Activated B cell treated with CpG ODN at 0.5 μM for 24 hours (primary cell): ENCODE measurements at regions of chr6 and their contacts with region 1.

Region 1: GRCh38 chr6:132669690-132670291 is 10.8 kb upstream of the TAAR1 start:
- DNase-seq: no peak
- ATAC-seq: peak; percentile 68
- H3K4me3 Mint-ChIP-seq: peak overlapping the region; percentile 55
- H3K27ac Mint-ChIP-seq: no peak overlapping the region
- H3K4me1 Mint-ChIP-seq: peaks cover 5% of the 10 kb centered on the region
- H3K27me3 Mint-ChIP-seq: no peaks in the 10 kb centered on the region
- CTCF ChIP-seq: peak; percentile 49

Region 2: DNA sequence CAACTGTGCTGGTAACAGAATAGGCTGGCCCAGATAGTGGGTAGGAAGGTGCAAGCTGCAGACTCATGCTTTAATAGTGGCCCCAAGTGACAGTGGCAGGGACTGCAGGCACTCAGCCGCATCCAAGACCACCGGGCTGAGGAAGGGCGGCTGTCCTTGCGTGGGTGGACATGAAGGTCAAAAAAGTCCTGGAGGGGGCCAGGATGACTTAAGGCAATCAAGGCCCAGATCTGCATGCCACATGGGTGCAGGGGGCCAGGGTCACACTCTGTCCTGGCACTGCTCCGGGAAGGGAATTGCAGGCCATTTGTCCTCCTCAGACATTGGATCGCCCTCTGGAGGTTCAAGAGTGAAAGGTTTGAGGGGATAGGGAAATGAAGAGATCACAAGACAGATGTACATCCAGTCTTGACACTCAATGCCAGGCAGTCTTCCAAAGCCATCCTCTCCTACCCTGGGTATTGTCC is 98.3 kb after region 1 on chr6:
- CTCF ChIA-PET with region 1: interaction called, 126 read pairs
- POLR2A ChIA-PET with region 1: interaction called, 4 read pairs
- intact Hi-C with region 1: loop called (anchors 1 kb)
- DNase-seq: peak; percentile 33
- ATAC-seq: peak; percentile 79
- H3K4me3 Mint-ChIP-seq: peak overlapping the region; percentile 47
- H3K27ac Mint-ChIP-seq: no peak overlapping the region
- H3K4me1 Mint-ChIP-seq: peaks cover 18% of the 10 kb centered on the region
- H3K27me3 Mint-ChIP-seq: no peaks in the 10 kb centered on the region
- CTCF ChIP-seq: peak; percentile 30

Region 3: DNA sequence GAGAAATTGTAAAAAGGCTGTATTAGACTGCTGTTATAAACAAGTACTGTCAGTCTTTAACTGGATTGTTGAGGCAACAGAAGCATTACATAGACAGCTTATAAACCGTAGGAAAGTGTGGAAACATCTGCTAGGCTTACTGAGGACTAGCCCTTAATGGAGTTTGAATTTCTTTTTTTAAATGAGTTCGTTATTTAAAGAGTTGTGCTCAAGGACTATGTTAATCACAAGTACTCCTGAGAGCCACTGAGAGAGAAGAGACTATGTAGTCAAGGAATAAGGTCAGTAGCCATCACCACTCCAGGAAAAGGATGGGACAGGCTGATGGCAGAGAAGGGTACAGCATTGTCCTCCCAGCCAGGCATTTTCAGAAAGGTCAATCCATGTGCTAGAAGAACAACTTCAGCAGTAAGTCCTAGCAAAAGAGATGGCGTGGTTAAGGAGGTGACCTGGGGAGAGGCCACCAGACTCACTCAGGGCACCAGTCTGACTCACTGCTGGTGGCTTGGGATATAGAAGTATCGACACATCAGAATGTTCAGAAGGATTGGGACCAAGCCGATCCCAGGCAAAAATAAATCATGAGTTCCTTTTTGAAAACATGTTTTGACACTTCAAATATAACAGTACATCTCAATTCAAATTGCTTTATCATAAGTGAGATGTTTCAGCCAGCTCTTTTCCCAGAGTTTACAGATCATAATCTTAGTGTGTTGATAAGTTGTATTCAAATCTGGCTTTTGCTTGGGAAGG is 151.0 kb after region 1 on chr6:
- CTCF ChIA-PET with region 1: interaction called, 15 read pairs
- POLR2A ChIA-PET with region 1: interaction called, 8 read pairs
- intact Hi-C with region 1: no loop called
- DNase-seq: no peak
- ATAC-seq: no peak
- H3K4me3 Mint-ChIP-seq: no peak overlapping the region
- H3K27ac Mint-ChIP-seq: peak overlapping the region; percentile 99
- H3K4me1 Mint-ChIP-seq: peaks cover 48% of the 10 kb centered on the region
- H3K27me3 Mint-ChIP-seq: no peaks in the 10 kb centered on the region
- CTCF ChIP-seq: no peak

Region 4: DNA sequence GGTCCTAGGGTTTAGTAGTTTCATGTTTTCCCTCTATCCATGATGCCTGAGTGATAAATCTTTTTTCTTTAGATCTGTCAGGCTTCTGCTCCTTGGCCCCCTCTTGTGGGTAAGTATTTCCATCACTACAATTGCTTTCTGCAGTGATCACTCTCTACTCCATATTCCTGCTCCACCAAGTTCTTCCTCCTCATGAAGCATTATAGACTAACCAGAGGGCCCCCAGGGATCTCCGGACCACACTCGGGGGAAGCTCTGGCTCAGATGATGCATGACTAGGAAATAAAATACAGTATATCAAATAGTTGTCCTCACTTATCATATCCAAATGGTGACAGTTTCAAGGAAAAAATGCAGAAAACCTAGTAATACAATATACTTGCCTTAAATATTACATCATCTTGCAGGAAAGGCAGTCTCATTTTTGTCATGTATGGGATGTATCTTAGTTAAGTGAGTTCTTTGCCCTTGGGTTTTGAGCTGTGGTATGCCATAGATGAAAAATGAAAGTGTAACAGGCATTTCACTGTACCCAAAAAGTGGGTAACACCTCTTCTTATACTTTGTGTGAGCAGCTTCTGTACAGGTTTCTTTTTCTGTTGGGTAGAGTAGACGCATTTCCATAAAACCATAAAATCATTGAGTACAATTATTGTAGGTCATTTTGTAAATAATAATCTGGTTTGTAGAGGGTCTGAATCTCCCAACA is 370.5 kb after region 1 on chr6:
- CTCF ChIA-PET with region 1: no interaction called
- POLR2A ChIA-PET with region 1: no interaction called
- intact Hi-C with region 1: loop called (anchors 2 kb)
- DNase-seq: no peak
- ATAC-seq: no peak
- H3K4me3 Mint-ChIP-seq: no peak overlapping the region
- H3K27ac Mint-ChIP-seq: no peak overlapping the region
- H3K4me1 Mint-ChIP-seq: no peaks in the 10 kb centered on the region
- H3K27me3 Mint-ChIP-seq: peaks cover 2% of the 10 kb centered on the region
- CTCF ChIP-seq: no peak

Region 5: GRCh38 chr6:133553652-133554051 is 883.9 kb after region 1 on chr6:
- CTCF ChIA-PET with region 1: interaction called, 3 read pairs
- POLR2A ChIA-PET with region 1: no interaction called
- intact Hi-C with region 1: loop called (anchors 10 kb)
- DNase-seq: no peak
- ATAC-seq: no peak
- H3K4me3 Mint-ChIP-seq: no peak overlapping the region
- H3K27ac Mint-ChIP-seq: no peak overlapping the region
- H3K4me1 Mint-ChIP-seq: no peaks in the 10 kb centered on the region
- H3K27me3 Mint-ChIP-seq: peaks cover 7% of the 10 kb centered on the region
- CTCF ChIP-seq: no peak